ENCODE measurements at regions of chr9 and their contacts with region 1.

Region 1: GRCh38 chr9:36407122-36407723 is 7.2 kb upstream of the RNF38 start:
- DNase-seq: peak; percentile 68
- H3K4me3 ChIP-seq: no peak overlapping the region
- H3K27ac ChIP-seq: no peak overlapping the region
- H3K4me1 ChIP-seq: no peaks in the 10 kb centered on the region
- H3K27me3 ChIP-seq: no peaks in the 10 kb centered on the region
- CTCF ChIP-seq: peak; percentile 95

Region 2: GRCh38 chr9:36154331-36154952 is 252.8 kb before region 1 on chr9:
- CTCF ChIA-PET with region 1: no interaction called
- POLR2A ChIA-PET with region 1: no interaction called
- intact Hi-C with region 1: no loop called
- DNase-seq: peak; percentile 54
- H3K4me3 ChIP-seq: no peak overlapping the region
- H3K27ac ChIP-seq: peak overlapping the region; percentile 8
- H3K4me1 ChIP-seq: peaks cover 6% of the 10 kb centered on the region
- H3K27me3 ChIP-seq: no peaks in the 10 kb centered on the region
- CTCF ChIP-seq: no peak

Region 3: GRCh38 chr9:36423206-36423605 is 16.0 kb after region 1 on chr9:
- CTCF ChIA-PET with region 1: no interaction called
- POLR2A ChIA-PET with region 1: no interaction called
- intact Hi-C with region 1: no loop called
- DNase-seq: no peak
- H3K4me3 ChIP-seq: no peak overlapping the region
- H3K27ac ChIP-seq: no peak overlapping the region
- H3K4me1 ChIP-seq: peaks cover 4% of the 10 kb centered on the region
- H3K27me3 ChIP-seq: no peaks in the 10 kb centered on the region
- CTCF ChIP-seq: no peak

Region 4: GRCh38 chr9:36450110-36450732 is 43.0 kb after region 1 on chr9:
- CTCF ChIA-PET with region 1: interaction called, 15 read pairs
- POLR2A ChIA-PET with region 1: no interaction called
- intact Hi-C with region 1: loop called (anchors 1 kb)
- DNase-seq: peak; percentile 79
- H3K4me3 ChIP-seq: no peak overlapping the region
- H3K27ac ChIP-seq: no peak overlapping the region
- H3K4me1 ChIP-seq: peaks cover 3% of the 10 kb centered on the region
- H3K27me3 ChIP-seq: no peaks in the 10 kb centered on the region
- CTCF ChIP-seq: peak; percentile 84

Region 5: DNA sequence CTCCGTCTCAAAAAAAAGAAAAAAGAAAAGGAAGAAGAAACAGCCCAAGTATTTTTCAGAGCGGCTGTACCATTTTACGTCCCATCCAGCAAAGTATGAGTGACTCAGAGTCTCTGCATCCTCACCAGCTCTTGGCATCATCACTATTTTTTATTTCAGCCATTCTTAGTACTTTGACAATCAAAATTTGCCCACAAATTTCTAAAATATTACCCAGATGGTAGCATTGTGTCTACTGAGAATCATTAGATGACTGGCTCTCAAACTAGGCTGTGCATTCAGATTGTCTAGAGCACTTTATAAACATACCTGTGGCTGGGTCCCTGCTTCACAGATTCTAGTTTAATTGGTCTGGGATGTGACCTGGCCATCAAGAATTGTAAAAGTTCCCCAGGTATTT is 143.9 kb after region 1 on chr9:
- CTCF ChIA-PET with region 1: interaction called, 12 read pairs
- POLR2A ChIA-PET with region 1: no interaction called
- intact Hi-C with region 1: loop called (anchors 1 kb)
- DNase-seq: no peak
- H3K4me3 ChIP-seq: no peak overlapping the region
- H3K27ac ChIP-seq: no peak overlapping the region
- H3K4me1 ChIP-seq: no peaks in the 10 kb centered on the region
- H3K27me3 ChIP-seq: no peaks in the 10 kb centered on the region
- CTCF ChIP-seq: no peak

Region 6: GRCh38 chr9:36560857-36561221 is 153.6 kb after region 1 on chr9:
- CTCF ChIA-PET with region 1: interaction called, 12 read pairs
- POLR2A ChIA-PET with region 1: no interaction called
- intact Hi-C with region 1: no loop called
- DNase-seq: no peak
- H3K4me3 ChIP-seq: no peak overlapping the region
- H3K27ac ChIP-seq: no peak overlapping the region
- H3K4me1 ChIP-seq: no peaks in the 10 kb centered on the region
- H3K27me3 ChIP-seq: no peaks in the 10 kb centered on the region
- CTCF ChIP-seq: no peak

Region 7: GRCh38 chr9:36728651-36729520 is 321.7 kb after region 1 on chr9:
- CTCF ChIA-PET with region 1: interaction called, 7 read pairs
- POLR2A ChIA-PET with region 1: no interaction called
- intact Hi-C with region 1: loop called (anchors 5 kb)
- DNase-seq: peak; percentile 86
- H3K4me3 ChIP-seq: no peak overlapping the region
- H3K27ac ChIP-seq: no peak overlapping the region
- H3K4me1 ChIP-seq: peaks cover 4% of the 10 kb centered on the region
- H3K27me3 ChIP-seq: no peaks in the 10 kb centered on the region
- CTCF ChIP-seq: peak; percentile 93